ENCODE measurements at regions of chr15 and their contacts with region 1.

Region 1: GRCh38 chr15:101242160-101242998 is 9.5 kb downstream of the CHSY1 start:
- DNase-seq: peak; percentile 78
- H3K4me3 Mint-ChIP-seq: peak overlapping the region; percentile 67
- H3K27ac Mint-ChIP-seq: peak overlapping the region; percentile 90
- H3K4me1 Mint-ChIP-seq: peaks cover 92% of the 10 kb centered on the region
- H3K27me3 Mint-ChIP-seq: no peaks in the 10 kb centered on the region

Region 2: GRCh38 chr15:101162626-101163102 is 79.7 kb before region 1 on chr15:
- CTCF ChIA-PET with region 1: no interaction called
- DNase-seq: no peak
- H3K4me3 Mint-ChIP-seq: no peak overlapping the region
- H3K27ac Mint-ChIP-seq: no peak overlapping the region
- H3K4me1 Mint-ChIP-seq: peaks cover 42% of the 10 kb centered on the region
- H3K27me3 Mint-ChIP-seq: peaks cover 5% of the 10 kb centered on the region

Region 3: DNA sequence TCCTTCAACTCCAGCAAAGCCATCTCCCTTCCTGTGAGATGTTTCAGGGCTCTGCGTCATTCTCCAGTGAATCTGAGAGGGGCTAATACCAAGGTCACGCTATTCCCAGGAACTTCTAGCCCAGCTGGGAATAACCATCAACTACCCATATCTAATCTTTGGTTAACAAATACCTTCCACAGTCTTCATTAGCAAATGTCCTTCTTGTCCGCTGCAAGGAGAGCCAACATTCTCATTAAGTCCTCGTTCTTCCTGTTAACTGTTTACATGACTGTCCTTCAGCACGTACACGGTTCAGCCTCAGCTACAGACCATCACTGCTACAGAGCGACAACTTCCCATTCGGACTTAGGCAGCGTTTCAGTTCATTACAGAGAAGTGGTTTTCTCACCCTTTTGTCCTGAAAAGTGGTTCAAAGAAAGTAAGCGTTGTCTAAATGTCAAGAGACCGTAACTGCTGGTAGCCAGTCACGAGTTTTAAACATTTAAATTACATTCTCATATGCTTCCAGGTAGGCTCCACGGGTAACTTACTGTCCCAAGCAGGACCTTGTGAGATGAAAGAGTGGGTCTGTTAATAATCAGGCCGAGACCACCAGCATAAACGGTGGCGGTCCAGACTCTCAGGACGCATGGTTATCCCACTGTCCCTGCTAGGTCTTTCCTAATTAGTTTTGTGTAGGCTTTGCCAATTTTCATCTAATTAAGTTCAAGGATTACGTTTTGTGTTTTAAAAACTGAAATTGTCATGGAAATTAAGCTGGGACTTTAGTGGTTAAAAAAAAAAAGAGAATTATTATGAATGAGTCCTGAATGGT is 54.4 kb before region 1 on chr15:
- CTCF ChIA-PET with region 1: no interaction called
- DNase-seq: no peak
- H3K4me3 Mint-ChIP-seq: no peak overlapping the region
- H3K27ac Mint-ChIP-seq: peak overlapping the region; percentile 49
- H3K4me1 Mint-ChIP-seq: peaks cover 62% of the 10 kb centered on the region
- H3K27me3 Mint-ChIP-seq: no peaks in the 10 kb centered on the region

Region 4: GRCh38 chr15:101206176-101206591 is 36.2 kb before region 1 on chr15:
- CTCF ChIA-PET with region 1: interaction called, 10 read pairs
- DNase-seq: peak; percentile 76
- H3K4me3 Mint-ChIP-seq: peak overlapping the region; percentile 60
- H3K27ac Mint-ChIP-seq: peak overlapping the region; percentile 78
- H3K4me1 Mint-ChIP-seq: peaks cover 77% of the 10 kb centered on the region
- H3K27me3 Mint-ChIP-seq: no peaks in the 10 kb centered on the region

Region 5: DNA sequence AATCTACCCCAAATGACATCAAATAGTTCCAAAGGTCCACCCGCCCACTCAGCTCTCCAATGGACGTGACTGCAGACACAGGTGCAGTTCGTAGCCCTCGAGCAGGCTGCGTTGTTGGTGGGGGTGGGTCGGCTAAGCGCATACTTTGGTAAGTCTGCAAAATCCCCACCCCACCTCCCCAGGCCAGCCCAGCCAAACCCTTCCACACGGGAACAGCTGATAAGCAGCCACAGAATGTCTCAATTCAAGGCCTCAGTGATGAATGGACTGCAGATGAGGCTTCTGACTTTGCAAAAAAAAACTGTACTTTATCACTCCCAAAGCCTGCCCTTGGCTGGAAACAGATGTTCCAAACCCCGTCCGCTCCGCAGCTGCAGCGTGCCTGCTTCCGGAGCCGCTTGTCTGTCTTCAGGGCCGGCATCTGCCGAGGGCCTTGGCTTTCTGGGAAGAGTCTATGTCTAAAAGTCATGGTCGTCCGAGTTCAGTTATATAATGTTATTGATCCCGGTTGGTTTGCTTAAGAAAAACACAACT is 209.0 kb after region 1 on chr15:
- CTCF ChIA-PET with region 1: no interaction called
- DNase-seq: no peak
- H3K4me3 Mint-ChIP-seq: no peak overlapping the region
- H3K27ac Mint-ChIP-seq: no peak overlapping the region
- H3K4me1 Mint-ChIP-seq: peaks cover 15% of the 10 kb centered on the region
- H3K27me3 Mint-ChIP-seq: peaks cover 50% of the 10 kb centered on the region

Measured in activated naive CD4-positive, alpha-beta T cell treated with anti-CD3 and anti-CD28 coated beads, Interleukin-2, amount 10 ng/mL, durations not matched to agents 7 days and 5 days (primary cell).